Mammary epithelial cell (primary cell): ENCODE measurements at regions of chr10 and their contacts with region 1.

Region 1: GRCh38 chr10:18651324-18652007 is at the start of gene NSUN6:
- DNase-seq: peak; percentile 83
- H3K4me3 ChIP-seq: peak within 1 kb of the TSS; percentile 65 to 90 (median 87)
- H3K27ac ChIP-seq: peak within 1 kb of the TSS; percentile 89
- H3K4me1 ChIP-seq: peaks cover 8% of the 10 kb centered on the region
- H3K27me3 ChIP-seq: no peaks in the 10 kb centered on the region
- CTCF ChIP-seq: peak in 1 of 2 donors; percentile 7
- total RNA-seq, gene NSUN6: 8.1 to 8.5 TPM

Region 2: GRCh38 chr10:18554479-18554878 is 97.0 kb before region 1 on chr10:
- CTCF ChIA-PET with region 1: no interaction called
- dilution Hi-C with region 1: no loop called
- in situ Hi-C with region 1: no loop called
- intact Hi-C with region 1: no loop called
- DNase-seq: no peak
- H3K4me3 ChIP-seq: no peak overlapping the region
- H3K27ac ChIP-seq: no peak overlapping the region
- H3K4me1 ChIP-seq: no peaks in the 10 kb centered on the region
- H3K27me3 ChIP-seq: no peaks in the 10 kb centered on the region
- CTCF ChIP-seq: no peak

Region 3: DNA sequence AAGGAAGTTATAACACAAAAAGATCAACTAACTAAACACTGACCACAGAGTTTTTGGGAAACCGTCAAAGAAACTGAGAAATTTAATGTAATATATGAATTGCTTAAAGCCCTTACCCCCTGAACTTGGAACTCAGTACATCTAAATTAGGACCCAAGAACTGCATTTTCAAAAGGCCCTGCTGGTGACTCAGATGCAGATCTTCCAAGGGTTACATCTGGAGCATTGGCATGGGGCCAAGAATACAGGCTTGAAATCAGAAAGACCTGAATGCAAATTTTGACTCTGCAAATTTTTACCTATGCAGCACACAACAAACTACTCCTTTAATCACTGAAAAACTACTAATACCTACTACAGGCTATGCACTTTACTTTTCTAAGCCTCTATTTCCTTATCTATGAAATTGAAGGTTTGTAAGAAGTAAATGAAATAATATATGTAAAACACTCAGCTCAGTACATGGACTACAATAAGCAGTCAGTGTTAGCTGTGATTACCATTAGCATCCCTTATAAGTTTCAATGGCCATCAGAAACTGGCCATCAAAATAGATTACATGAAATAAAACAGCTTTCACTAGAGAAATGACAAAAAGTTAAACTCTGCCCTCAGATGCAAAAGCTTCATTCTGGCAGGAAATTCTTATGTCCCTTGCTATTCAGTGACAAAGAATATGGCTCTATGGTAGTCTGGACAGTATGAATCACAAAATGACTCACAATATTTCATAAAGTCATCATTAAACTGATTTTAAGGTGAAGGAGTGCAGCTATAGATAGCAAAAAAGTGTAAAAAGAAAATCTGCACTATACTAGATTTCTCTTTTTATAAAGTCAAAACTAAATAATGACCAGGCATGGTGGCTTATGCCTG is 43.7 kb before region 1 on chr10:
- CTCF ChIA-PET with region 1: no interaction called
- dilution Hi-C with region 1: no loop called
- in situ Hi-C with region 1: no loop called
- intact Hi-C with region 1: loop called (anchors 5 kb)
- DNase-seq: peak; percentile 67
- H3K4me3 ChIP-seq: no peak overlapping the region
- H3K27ac ChIP-seq: peak overlapping the region; percentile 51
- H3K4me1 ChIP-seq: peaks cover 24% of the 10 kb centered on the region
- H3K27me3 ChIP-seq: no peaks in the 10 kb centered on the region
- CTCF ChIP-seq: no peak

Region 4: DNA sequence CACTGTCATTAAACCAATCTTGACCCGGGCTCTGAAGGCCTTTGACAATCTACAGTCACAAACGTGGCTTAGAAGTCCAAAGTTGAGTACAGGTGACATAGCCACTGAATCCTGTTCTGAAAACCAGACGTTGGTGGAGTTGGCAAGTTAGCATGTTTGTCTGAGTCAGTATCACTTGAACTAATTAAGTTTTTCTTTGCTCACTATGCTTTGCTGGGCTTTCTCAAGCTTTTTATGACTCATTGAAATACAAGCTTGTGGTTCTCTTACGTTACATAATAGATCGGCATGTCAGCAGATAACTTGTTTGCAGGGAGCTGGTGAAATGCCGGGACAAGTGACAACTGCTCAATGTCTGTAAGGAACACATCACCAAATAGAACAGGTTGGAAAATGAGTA is 61.6 kb after region 1 on chr10:
- CTCF ChIA-PET with region 1: no interaction called
- dilution Hi-C with region 1: no loop called
- in situ Hi-C with region 1: no loop called
- intact Hi-C with region 1: loop called (anchors 2 kb)
- DNase-seq: peak; percentile 89
- H3K4me3 ChIP-seq: no peak overlapping the region
- H3K27ac ChIP-seq: no peak overlapping the region
- H3K4me1 ChIP-seq: peaks cover 6% of the 10 kb centered on the region
- H3K27me3 ChIP-seq: peaks cover 2% of the 10 kb centered on the region
- CTCF ChIP-seq: no peak